H1 (cell line): ENCODE measurements at regions of chr10 and their contacts with region 1.

Region 1: DNA sequence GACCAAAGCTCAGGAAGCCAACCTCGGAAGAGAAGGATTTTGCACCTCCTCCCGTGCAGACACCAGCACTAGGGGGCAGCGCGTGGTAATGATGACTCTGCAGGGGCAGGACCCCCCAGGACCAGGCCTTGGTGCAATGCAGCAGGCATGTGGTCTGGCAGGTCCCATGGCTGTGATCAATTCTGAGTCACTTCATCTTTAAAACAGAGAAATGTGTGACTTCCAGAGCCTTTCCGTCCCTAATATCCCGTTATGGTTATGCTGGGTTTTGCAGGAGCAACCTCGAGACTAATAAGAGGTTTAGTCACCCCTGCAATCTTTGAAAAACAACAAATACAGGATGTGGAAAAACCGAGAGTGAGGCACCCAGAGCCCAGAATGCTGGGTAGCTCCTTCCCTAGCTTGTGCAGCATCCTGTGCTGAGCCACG is 30.2 kb upstream of the GJD4 start:
- DNase-seq: peak; percentile 15 to 61
- H3K4me3 ChIP-seq: no peak overlapping the region
- H3K27ac ChIP-seq: no peak overlapping the region
- H3K4me1 ChIP-seq: peaks cover 1 to 6% (median 5%) of the 10 kb centered on the region in 4 experiments; a peak in 6 of 7 replicates
- H3K27me3 ChIP-seq: no peaks in the 10 kb centered on the region
- CTCF ChIP-seq: peak; percentile 46 to 67 (median 58)
- EP300 ChIP-seq: no peak
- POLR2A ChIP-seq: no peak
- RAD21 ChIP-seq: peak; percentile 40 to 50; a peak in 3 of 4 replicates

Region 2: DNA sequence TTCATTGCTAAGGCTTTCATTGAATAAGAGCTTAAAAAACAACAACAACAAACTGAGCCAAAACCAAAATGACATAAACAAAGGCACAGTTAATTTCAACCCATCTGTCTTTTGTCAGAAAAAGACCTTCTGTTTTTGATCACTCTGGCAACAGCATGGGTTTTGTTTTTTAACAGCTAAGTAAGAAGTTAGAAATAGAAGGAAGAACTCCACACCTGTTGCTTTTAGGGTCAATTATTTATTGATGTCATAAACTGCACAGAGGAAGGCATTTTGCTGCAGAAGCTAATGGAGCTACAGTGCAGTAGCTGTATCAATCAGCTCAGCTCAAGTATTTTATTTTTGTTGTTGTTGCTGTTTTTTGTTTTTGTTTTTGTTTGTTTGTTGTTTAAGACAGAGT is 13.9 kb after region 1 on chr10:
- CTCF ChIA-PET with region 1: interaction called, 10 read pairs
- POLR2A ChIA-PET with region 1: interaction called, 4 read pairs
- DNase-seq: no peak
- H3K4me3 ChIP-seq: no peak overlapping the region
- H3K27ac ChIP-seq: no peak overlapping the region
- H3K4me1 ChIP-seq: peaks cover 0 to 9% (median 4%) of the 10 kb centered on the region in 4 experiments; a peak in 6 of 7 replicates
- H3K27me3 ChIP-seq: no peaks in the 10 kb centered on the region; a peak in 1 of 7 replicates
- CTCF ChIP-seq: no peak
- EP300 ChIP-seq: no peak
- POLR2A ChIP-seq: no peak
- RAD21 ChIP-seq: no peak